ENCODE measurements at regions of chr9 and their contacts with region 1.

Region 1: DNA sequence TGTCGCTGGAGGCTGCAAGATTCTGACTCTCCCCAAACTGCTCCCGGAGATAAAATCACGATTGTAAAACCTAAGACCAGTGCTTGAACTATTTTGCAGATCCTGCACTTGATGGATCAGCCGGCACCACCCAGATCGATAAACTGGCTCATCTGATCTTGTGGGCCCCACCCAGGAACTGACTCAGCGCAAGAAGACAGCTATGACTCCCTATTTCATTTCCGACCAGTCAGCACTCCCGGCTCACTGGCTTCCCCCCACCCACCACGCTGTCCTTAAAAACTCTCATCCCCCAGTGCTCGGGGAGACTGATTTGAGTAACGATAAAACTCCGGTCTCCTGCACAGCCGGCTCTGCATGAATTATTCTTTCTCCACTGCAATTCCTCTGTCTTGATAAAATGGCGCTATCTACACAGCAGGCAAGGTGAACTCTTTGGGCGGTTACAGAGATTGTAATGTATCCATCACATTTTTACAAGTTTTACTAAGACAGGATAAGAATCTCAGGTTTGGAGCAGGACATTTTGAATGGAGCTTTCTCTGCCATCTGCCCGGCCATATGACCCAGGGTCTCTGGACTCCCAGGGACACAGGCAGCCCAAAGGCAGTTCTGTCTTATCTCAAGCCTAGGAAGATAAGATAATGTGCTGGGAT is 10.6 kb upstream of the PPP1R26 start:
- DNase-seq: peak; percentile 82
- H3K4me3 Mint-ChIP-seq: peak overlapping the region; percentile 44
- H3K27ac Mint-ChIP-seq: peak overlapping the region; percentile 74
- H3K4me1 Mint-ChIP-seq: peaks cover 13% of the 10 kb centered on the region
- H3K27me3 Mint-ChIP-seq: peaks cover 15% of the 10 kb centered on the region

Region 2: GRCh38 chr9:135500525-135501358 is 31.7 kb after region 1 on chr9 and contains the start of gene MRPS2:
- intact Hi-C with region 1: loop called (anchors 1 kb)
- DNase-seq: peak; percentile 97
- H3K4me3 Mint-ChIP-seq: peak within 1 kb of the TSS; percentile 95
- H3K27ac Mint-ChIP-seq: peak within 1 kb of the TSS; percentile 97
- H3K4me1 Mint-ChIP-seq: peaks cover 7% of the 10 kb centered on the region
- H3K27me3 Mint-ChIP-seq: peaks cover 8% of the 10 kb centered on the region
- total RNA-seq, gene MRPS2: 66.4 and 69.7 TPM in 2 replicates